HepG2 (cell line): ENCODE measurements at regions of chr22 and their contacts with region 1.

Region 1: GRCh38 chr22:32781695-32782094 is 19.8 kb upstream of the TIMP3 start:
- DNase-seq: no peak
- ATAC-seq: no peak
- H3K4me3 ChIP-seq: no peak overlapping the region
- H3K27ac ChIP-seq: peak overlapping the region; percentile 55
- H3K4me1 ChIP-seq: peaks cover 98% of the 10 kb centered on the region
- H3K27me3 ChIP-seq: no peaks in the 10 kb centered on the region
- CTCF ChIP-seq: no peak
- EP300 ChIP-seq: no peak
- POLR2A ChIP-seq: no peak
- RAD21 ChIP-seq: no peak

Region 2: GRCh38 chr22:32534252-32535240 is 247.1 kb before region 1 on chr22:
- CTCF ChIA-PET with region 1: no interaction called
- POLR2A ChIA-PET with region 1: interaction called, 27 read pairs
- in situ Hi-C with region 1: no loop called
- intact Hi-C with region 1: no loop called
- DNase-seq: peak; percentile 87
- ATAC-seq: peak; percentile 37
- H3K4me3 ChIP-seq: peak overlapping the region; percentile 31 to 72 (median 40); a peak in 5 of 6 replicates
- H3K27ac ChIP-seq: peak overlapping the region; percentile 78
- H3K4me1 ChIP-seq: peaks cover 91% of the 10 kb centered on the region
- H3K27me3 ChIP-seq: no peaks in the 10 kb centered on the region
- CTCF ChIP-seq: peak; percentile 34; the same call in 1 of the 2 replicates
- EP300 ChIP-seq: peak in 1 of 2 experiments; percentile 66; a peak in 1 of 4 replicates
- POLR2A ChIP-seq: peak in 1 of 2 experiments; percentile 55; a peak in 2 of 4 replicates
- RAD21 ChIP-seq: no peak

Region 3: DNA sequence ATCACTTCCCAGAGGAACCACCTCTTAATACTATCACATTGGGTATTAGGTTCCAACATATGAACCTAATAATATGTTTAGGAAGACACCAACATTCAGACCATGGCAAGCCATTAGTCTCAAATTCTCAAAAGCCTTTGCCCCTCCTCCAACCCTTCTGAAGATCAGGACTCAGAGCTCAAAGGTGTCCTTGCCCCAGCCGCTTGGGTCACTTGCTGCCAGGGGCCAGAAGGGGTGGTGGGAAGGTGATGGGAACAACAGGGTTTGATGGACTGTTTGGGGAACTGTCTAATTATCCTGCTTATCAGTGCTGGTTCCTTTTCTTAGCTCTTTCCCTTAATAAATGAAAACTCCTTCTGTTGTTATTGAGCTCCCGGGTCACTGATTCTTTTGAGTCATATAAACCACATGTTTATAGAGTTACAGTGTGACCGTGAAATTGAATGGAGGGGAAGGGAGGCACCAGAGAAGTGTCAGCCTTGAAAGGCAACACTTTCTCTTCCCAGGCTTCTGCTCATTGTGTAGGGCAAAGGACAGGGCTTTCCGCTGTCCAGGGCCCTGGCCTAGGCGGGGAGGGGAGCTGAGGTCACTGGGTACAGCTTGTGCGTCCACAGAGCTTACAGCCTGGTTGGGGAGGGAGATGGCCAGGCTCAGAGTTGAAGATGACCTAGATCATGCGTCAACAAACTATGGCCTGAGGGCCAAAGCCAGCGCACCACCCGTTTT is 202.0 kb before region 1 on chr22:
- CTCF ChIA-PET with region 1: no interaction called
- POLR2A ChIA-PET with region 1: interaction called, 18 read pairs
- in situ Hi-C with region 1: no loop called
- intact Hi-C with region 1: no loop called
- DNase-seq: peak; percentile 50
- ATAC-seq: peak; percentile 85
- H3K4me3 ChIP-seq: no peak overlapping the region
- H3K27ac ChIP-seq: peak overlapping the region; percentile 43
- H3K4me1 ChIP-seq: peaks cover 62% of the 10 kb centered on the region
- H3K27me3 ChIP-seq: no peaks in the 10 kb centered on the region
- CTCF ChIP-seq: no peak
- EP300 ChIP-seq: 0 out of 4 replicates have a peak, but pooled peaks of 1 of the 2 experiments have one; percentile 20
- POLR2A ChIP-seq: no peak
- RAD21 ChIP-seq: no peak

Region 4: DNA sequence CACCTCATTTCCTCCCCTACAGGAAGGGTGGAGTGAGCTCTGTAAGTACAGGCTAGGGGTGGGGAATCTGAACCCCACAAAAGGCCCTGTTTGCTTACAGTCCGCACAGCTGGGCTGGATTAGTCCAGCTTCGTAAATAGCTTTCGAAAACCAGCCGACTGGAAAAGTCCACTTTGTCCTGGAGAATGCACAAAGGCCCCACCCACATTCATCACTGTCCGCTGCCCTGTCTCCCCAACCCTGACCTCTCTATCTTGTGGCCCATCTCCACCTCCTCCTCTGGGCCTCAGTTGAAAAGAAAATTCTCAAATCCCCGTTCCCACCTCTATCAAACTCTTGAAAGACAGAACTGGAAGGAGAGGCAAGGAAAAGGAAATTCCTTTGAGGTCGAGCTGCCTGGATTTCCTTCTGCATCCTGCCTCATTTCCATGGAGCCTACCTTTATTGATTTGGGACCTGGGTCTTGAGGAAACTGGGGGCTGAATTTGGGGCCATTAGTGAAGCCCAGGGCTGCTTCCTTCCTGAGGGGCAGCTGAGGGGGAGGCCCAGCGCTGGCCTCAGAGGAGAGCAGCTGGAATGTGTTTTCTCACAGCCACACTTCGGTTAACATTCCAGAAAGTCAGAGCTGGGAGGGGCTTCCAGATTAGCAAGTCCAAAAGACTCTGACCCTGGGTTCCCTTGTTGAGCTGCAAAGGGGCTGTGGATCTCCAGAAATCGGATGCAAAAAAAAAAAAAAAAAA is 159.5 kb before region 1 on chr22:
- CTCF ChIA-PET with region 1: no interaction called
- POLR2A ChIA-PET with region 1: interaction called, 17 read pairs
- in situ Hi-C with region 1: no loop called
- intact Hi-C with region 1: no loop called
- DNase-seq: peak; percentile 89
- ATAC-seq: peak; percentile 80
- H3K4me3 ChIP-seq: peak overlapping the region; percentile 43 to 60 (median 50)
- H3K27ac ChIP-seq: peak overlapping the region; percentile 92
- H3K4me1 ChIP-seq: peaks cover 99% of the 10 kb centered on the region
- H3K27me3 ChIP-seq: no peaks in the 10 kb centered on the region
- CTCF ChIP-seq: no peak
- EP300 ChIP-seq: peak in 1 of 2 experiments; percentile 71; a peak in 2 of 4 replicates
- POLR2A ChIP-seq: peak in 1 of 2 experiments; percentile 49; a peak in 1 of 4 replicates
- RAD21 ChIP-seq: no peak

Region 5: GRCh38 chr22:32695451-32695891 is 86.2 kb before region 1 on chr22:
- CTCF ChIA-PET with region 1: no interaction called
- POLR2A ChIA-PET with region 1: interaction called, 18 read pairs
- in situ Hi-C with region 1: no loop called
- intact Hi-C with region 1: no loop called
- DNase-seq: peak; percentile 87
- ATAC-seq: peak; percentile 86
- H3K4me3 ChIP-seq: no peak overlapping the region
- H3K27ac ChIP-seq: peak overlapping the region; percentile 53
- H3K4me1 ChIP-seq: peaks cover 62% of the 10 kb centered on the region
- H3K27me3 ChIP-seq: no peaks in the 10 kb centered on the region
- CTCF ChIP-seq: no peak
- EP300 ChIP-seq: peak in 1 of 2 experiments; percentile 46; a peak in 2 of 4 replicates
- POLR2A ChIP-seq: no peak
- RAD21 ChIP-seq: no peak

Region 6: DNA sequence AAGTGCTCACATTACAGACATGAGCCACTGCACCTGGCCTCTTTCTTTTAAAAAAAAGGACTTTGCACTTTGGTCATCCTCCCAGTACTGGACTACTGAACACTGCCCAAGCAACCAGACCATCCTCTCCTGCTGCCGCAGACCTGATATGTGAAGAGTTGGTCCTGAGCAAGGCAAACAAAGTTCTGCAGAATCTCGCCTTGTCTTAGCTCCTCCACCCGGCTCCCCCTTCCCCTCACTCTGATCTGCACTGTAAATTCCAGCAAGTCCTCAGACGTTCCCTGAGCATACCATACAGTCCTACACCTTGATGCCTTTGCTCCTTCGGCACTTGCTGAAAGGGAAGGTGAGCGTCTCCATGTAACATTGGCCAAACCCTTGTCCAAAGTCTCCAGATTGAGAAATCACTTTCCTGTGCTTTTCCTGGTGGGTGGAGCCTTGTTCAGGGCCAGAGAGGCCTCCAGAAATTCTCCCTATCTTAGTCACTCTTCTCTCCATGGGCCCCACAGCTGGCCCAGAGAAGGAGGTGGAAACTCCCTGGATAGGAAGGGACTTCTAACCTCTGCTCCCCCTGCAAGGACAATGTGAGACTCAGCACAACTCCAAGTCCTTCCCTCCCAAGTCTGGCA is 27.2 kb before region 1 on chr22:
- CTCF ChIA-PET with region 1: no interaction called
- POLR2A ChIA-PET with region 1: interaction called, 27 read pairs
- in situ Hi-C with region 1: no loop called
- intact Hi-C with region 1: loop called (anchors 5 kb)
- DNase-seq: peak; percentile 83
- ATAC-seq: peak; percentile 84
- H3K4me3 ChIP-seq: peak overlapping the region in 1 of 3 experiments; percentile 49; a peak in 1 of 6 replicates
- H3K27ac ChIP-seq: peak overlapping the region; percentile 72
- H3K4me1 ChIP-seq: peaks cover 75% of the 10 kb centered on the region
- H3K27me3 ChIP-seq: no peaks in the 10 kb centered on the region
- CTCF ChIP-seq: 0 out of 2 replicates have a peak, but pooled peaks have one; percentile 0
- EP300 ChIP-seq: peak in 1 of 2 experiments; percentile 64; a peak in 1 of 4 replicates
- POLR2A ChIP-seq: no peak
- RAD21 ChIP-seq: no peak

Region 7: GRCh38 chr22:32880893-32881596 is 99.3 kb after region 1 on chr22:
- CTCF ChIA-PET with region 1: no interaction called
- POLR2A ChIA-PET with region 1: no interaction called
- in situ Hi-C with region 1: no loop called
- intact Hi-C with region 1: no loop called
- DNase-seq: no peak
- ATAC-seq: no peak
- H3K4me3 ChIP-seq: no peak overlapping the region
- H3K27ac ChIP-seq: no peak overlapping the region
- H3K4me1 ChIP-seq: no peaks in the 10 kb centered on the region
- H3K27me3 ChIP-seq: no peaks in the 10 kb centered on the region
- CTCF ChIP-seq: no peak
- EP300 ChIP-seq: no peak
- POLR2A ChIP-seq: no peak
- RAD21 ChIP-seq: no peak